ENCODE measurements at regions of chr14 and their contacts with region 1.

Region 1: GRCh38 chr14:61321385-61322010 is at the start of gene PRKCH:
- DNase-seq: peak; percentile 81 to 91 (median 90)
- ATAC-seq: peak; percentile 85 to 91
- H3K4me3 ChIP-seq: peak within 1 kb of the TSS; percentile 66
- H3K27ac ChIP-seq: peak within 1 kb of the TSS; percentile 31
- H3K4me1 ChIP-seq: no peaks in the 10 kb centered on the region
- H3K27me3 ChIP-seq: no peaks in the 10 kb centered on the region
- total RNA-seq, gene PRKCH: 25.8 to 31.3 (median 28.2) TPM

Region 2: DNA sequence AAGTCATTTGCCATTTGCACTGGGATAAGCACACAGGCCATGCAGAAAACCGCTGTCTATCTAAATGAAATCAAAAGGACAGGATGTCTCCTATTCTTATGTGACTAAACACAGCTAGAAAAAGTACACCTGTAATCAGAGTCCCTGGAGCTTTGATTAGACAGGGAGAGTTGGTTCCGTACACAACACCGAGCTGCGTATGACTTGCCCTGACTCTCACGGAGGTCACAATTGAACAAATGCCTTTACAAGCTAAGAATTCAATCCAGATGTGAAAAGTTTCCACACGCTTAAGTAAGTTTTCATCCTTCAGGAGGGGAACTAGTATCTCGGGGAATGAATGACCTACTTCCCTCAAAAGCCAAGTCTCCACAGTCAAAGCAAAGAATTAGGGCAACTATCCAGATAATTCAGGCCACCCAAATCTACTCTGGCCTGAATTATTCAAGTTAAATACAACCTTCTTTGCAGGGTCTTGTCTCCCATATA is 1518.4 kb before region 1 on chr14:
- intact Hi-C with region 1: no loop called
- DNase-seq: no peak
- ATAC-seq: no peak
- H3K4me3 ChIP-seq: no peak overlapping the region
- H3K27ac ChIP-seq: no peak overlapping the region
- H3K4me1 ChIP-seq: no peaks in the 10 kb centered on the region
- H3K27me3 ChIP-seq: no peaks in the 10 kb centered on the region

Region 3: DNA sequence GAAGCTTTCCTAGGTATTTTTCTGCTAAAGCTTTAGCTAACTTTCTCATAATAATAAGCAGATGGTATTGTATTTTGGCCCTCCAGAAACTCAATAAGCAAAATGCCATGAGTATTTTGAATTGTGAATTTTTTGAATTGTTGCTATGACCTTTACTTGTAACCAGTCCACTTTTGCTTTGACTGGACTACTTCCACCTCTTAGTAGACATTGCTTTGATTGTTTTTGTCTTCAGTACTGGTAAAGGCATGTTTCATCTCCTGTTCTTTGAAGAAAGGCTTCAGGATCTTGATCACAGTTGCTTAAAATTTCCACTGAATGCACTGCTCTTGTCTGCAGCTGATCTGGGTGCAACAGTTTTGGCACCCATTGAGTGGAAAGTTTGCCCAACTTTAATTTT is 443.0 kb before region 1 on chr14:
- intact Hi-C with region 1: no loop called
- DNase-seq: no peak
- ATAC-seq: no peak
- H3K4me3 ChIP-seq: no peak overlapping the region
- H3K27ac ChIP-seq: no peak overlapping the region
- H3K4me1 ChIP-seq: no peaks in the 10 kb centered on the region
- H3K27me3 ChIP-seq: no peaks in the 10 kb centered on the region

Region 4: GRCh38 chr14:61168141-61168540 is 153.4 kb before region 1 on chr14:
- intact Hi-C with region 1: no loop called
- DNase-seq: no peak
- ATAC-seq: no peak
- H3K4me3 ChIP-seq: no peak overlapping the region
- H3K27ac ChIP-seq: no peak overlapping the region
- H3K4me1 ChIP-seq: no peaks in the 10 kb centered on the region
- H3K27me3 ChIP-seq: no peaks in the 10 kb centered on the region

Region 5: DNA sequence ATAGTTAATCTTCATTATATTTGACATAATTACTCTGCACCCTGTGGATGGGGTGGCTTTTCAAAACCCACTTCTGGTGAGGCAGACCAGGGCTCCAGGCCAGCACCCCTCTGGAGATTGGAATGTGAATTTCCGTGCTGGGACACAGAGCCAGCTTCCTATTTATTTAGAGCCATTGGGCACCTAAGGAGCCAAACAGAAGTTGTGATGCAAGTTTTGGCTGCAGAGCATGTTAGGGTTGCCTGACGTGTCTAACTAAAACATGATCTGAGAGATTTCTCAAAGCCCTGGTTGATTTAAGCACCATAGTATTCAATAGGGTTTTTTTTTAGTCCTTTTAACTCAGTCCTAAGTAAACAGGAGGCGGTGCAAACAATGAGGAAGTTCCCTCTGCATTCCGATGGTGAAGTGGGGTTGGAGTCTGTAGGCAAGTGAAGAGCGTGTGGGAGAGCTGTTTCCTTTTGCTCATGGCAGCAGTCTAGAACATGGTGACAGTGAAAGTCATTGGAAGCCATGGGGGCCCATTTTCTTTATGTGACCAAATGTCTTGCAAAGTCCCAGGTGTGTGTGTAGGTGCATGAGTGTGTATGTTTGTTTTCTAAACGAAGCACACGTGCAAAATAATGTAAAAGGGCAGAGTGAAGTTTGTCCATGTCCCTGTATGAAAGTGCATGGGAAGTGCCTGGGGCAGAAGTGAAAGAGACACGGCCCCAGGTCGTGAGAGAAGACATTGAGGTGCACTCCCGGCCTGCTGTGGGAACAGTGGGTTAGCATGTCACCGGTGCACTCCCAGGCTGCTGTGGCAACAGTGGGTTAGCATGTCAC is 117.6 kb after region 1 on chr14:
- intact Hi-C with region 1: loop called in 1 of 4 experiments (anchors 10 kb)
- DNase-seq: peak; percentile 55 to 80 (median 70)
- ATAC-seq: peak; percentile 87 to 90
- H3K4me3 ChIP-seq: peak overlapping the region; percentile 17
- H3K27ac ChIP-seq: peak overlapping the region; percentile 69
- H3K4me1 ChIP-seq: peaks cover 10% of the 10 kb centered on the region
- H3K27me3 ChIP-seq: no peaks in the 10 kb centered on the region

Measured in right cardiac atrium (tissue), 5 donors.